Natural killer cell (primary cell): ENCODE measurements at regions of chr22 and their contacts with region 1.

Region 1: DNA sequence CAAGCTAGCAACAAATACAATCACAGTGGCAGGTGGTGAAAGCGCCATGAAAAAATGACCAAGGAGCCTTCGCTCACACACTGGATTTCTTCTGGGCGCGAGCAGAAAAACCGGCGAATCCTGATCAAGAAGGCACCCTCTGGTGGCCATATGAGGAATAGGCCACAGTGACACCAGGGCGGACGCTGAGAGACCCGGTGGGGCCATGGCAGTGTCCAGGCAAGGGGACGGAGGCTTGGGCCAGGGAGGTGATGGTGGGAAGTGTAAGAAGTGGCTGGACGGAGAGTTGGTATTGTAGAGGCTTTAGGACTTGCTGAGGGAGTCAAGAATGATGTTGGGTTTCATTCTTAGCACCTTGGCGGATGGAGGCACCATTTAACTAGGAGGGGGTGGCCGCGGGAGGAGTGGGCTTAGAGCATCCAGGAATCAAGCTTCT is 16.9 kb upstream of the RAC2 start:
- DNase-seq: peak; percentile 53 to 83
- ATAC-seq: peak; percentile 78 to 96 (median 93)
- H3K4me3 ChIP-seq: no peak overlapping the region
- H3K4me3 Mint-ChIP-seq: no peak overlapping the region
- H3K27ac ChIP-seq: no peak overlapping the region
- H3K27ac Mint-ChIP-seq: peak overlapping the region in 1 of 2 donors; percentile 73
- H3K4me1 ChIP-seq: peaks cover 22% of the 10 kb centered on the region
- H3K4me1 Mint-ChIP-seq: peaks cover 9 to 17% of the 10 kb centered on the region in 2 donors
- H3K27me3 ChIP-seq: no peaks in the 10 kb centered on the region
- H3K27me3 Mint-ChIP-seq: peaks cover 0 to 9% of the 10 kb centered on the region in 2 donors
- CTCF ChIP-seq: peak; percentile 90

Region 2: GRCh38 chr22:37229805-37230672 is 30.9 kb before region 1 on chr22:
- intact Hi-C with region 1: loop called (anchors 5 kb)
- DNase-seq: peak; percentile 85 to 96
- ATAC-seq: peak; percentile 78 to 93 (median 93)
- H3K4me3 ChIP-seq: peak overlapping the region; percentile 11
- H3K4me3 Mint-ChIP-seq: peak overlapping the region; percentile 81
- H3K27ac ChIP-seq: peak overlapping the region; percentile 97
- H3K27ac Mint-ChIP-seq: peak overlapping the region; percentile 93 to 98
- H3K4me1 ChIP-seq: peaks cover 94% of the 10 kb centered on the region
- H3K4me1 Mint-ChIP-seq: peaks cover 82 to 90% of the 10 kb centered on the region in 2 donors
- H3K27me3 ChIP-seq: no peaks in the 10 kb centered on the region
- H3K27me3 Mint-ChIP-seq: no peaks in the 10 kb centered on the region
- CTCF ChIP-seq: no peak

Region 3: DNA sequence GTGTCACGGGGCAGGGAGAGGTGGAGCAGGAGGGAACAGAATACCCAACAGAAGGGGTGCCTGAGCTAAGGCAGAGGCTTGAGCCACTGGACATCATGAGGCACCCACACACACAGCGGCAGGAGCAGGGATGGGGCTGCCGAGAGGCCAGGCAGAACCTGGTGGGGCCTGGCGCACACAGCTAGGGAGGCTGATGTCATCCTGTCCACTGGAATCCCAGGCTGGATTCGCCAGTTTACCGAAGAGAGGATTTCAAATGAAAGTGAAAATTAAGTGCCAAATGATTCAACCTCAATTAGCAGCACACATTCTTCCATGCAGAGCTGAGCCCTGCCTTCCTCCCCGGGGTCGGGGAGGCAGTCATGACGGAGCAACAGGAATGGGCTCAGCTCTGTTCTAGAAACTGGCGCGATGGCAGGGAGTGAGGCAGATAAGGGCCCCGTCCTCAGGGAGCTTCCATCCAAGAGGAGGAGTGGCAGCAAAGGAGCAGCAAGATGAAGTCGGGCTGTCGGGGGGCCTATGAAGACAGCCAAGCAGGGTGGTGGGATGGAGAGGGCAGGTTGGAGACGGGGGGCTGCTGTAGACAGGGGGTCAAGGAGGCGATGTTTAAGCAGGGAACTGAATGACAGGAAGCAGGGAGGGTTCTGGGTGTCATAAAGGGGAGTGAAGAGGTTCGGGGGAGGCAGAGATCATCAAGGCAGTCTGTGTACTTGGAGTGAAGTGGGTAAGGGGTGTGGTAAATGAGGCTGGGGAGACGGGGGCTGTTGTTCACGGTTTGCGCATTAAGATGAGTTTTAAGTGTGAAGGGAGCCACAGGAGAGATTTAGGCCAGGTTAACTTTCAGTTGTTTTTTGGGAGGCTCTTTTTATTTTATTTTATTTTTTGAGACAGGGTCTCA is 23.3 kb before region 1 on chr22:
- intact Hi-C with region 1: loop called (anchors 2 kb)
- DNase-seq: peak in 1 of 2 donors; percentile 58
- ATAC-seq: no peak
- H3K4me3 ChIP-seq: no peak overlapping the region
- H3K4me3 Mint-ChIP-seq: peak overlapping the region; percentile 83
- H3K27ac ChIP-seq: peak overlapping the region; percentile 82
- H3K27ac Mint-ChIP-seq: peak overlapping the region; percentile 93 to 98
- H3K4me1 ChIP-seq: peaks cover 96% of the 10 kb centered on the region
- H3K4me1 Mint-ChIP-seq: peaks cover 87 to 97% of the 10 kb centered on the region in 2 donors
- H3K27me3 ChIP-seq: no peaks in the 10 kb centered on the region
- H3K27me3 Mint-ChIP-seq: no peaks in the 10 kb centered on the region
- CTCF ChIP-seq: no peak